Activated CD4-positive, alpha-beta T cell treated with anti-CD3 and anti-CD28 coated beads, Interleukin-2, amount 10 ng/mL, durations not matched to agents 24 days and 14 days (primary cell): ENCODE measurements at regions of chr21 and their contacts with region 1.

Region 1: DNA sequence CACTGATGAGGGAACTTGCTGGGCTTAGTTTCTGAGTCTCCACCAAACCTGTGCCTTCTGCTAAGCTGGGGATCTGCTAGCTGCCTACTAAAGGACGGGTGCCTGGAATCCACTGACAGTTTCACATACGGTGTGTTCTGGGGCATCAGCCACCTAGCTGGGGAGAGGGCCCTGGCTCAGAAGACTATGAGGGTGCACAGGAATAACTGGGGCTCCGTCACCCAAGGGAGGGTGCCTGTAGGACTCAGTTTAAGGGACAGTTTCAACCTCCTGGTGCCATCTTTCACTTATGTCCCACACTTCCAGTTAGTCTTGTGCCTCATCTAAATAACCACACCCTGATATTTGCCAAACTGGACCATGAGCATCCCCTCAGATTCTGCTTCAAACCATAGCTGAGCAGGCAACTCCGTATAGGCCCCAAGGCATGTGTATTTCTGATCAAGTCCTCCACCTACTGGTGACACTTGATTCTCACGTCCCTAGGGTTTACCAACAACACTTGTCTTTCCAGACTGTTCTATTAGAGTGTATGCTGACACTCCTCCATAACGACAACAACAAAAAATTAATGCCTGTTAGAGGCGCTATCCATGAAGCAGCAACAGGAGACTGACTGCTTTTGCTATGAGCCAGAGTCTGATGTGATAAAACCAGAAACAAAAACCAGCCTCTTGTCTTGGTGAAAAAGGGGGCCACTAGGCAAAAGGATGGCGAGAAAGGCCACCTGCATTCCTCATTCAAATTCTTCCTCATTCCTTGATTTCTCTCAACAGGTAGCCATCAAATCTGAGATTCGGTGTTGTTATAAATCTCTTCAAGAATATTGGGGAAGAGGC is 55.0 kb upstream of the PAXBP1 start:
- DNase-seq: peak; percentile 82
- H3K4me3 Mint-ChIP-seq: no peak overlapping the region
- H3K27ac Mint-ChIP-seq: no peak overlapping the region
- H3K4me1 Mint-ChIP-seq: peaks cover 3% of the 10 kb centered on the region
- H3K27me3 Mint-ChIP-seq: peaks cover 20% of the 10 kb centered on the region

Region 2: GRCh38 chr21:32653311-32653901 is 173.1 kb before region 1 on chr21:
- intact Hi-C with region 1: loop called (anchors 1 kb)
- DNase-seq: peak; percentile 79
- H3K4me3 Mint-ChIP-seq: no peak overlapping the region
- H3K27ac Mint-ChIP-seq: no peak overlapping the region
- H3K4me1 Mint-ChIP-seq: peaks cover 9% of the 10 kb centered on the region
- H3K27me3 Mint-ChIP-seq: no peaks in the 10 kb centered on the region

Region 3: GRCh38 chr21:32687643-32688345 is 138.8 kb before region 1 on chr21:
- intact Hi-C with region 1: loop called (anchors 1 kb)
- DNase-seq: peak; percentile 52
- H3K4me3 Mint-ChIP-seq: no peak overlapping the region
- H3K27ac Mint-ChIP-seq: no peak overlapping the region
- H3K4me1 Mint-ChIP-seq: no peaks in the 10 kb centered on the region
- H3K27me3 Mint-ChIP-seq: no peaks in the 10 kb centered on the region